ENCODE measurements at regions of chr2 and their contacts with region 1.

Region 1: GRCh38 chr2:61016808-61017555 is 538 bp upstream of the PEX13 start:
- DNase-seq: peak; percentile 91

Region 2: DNA sequence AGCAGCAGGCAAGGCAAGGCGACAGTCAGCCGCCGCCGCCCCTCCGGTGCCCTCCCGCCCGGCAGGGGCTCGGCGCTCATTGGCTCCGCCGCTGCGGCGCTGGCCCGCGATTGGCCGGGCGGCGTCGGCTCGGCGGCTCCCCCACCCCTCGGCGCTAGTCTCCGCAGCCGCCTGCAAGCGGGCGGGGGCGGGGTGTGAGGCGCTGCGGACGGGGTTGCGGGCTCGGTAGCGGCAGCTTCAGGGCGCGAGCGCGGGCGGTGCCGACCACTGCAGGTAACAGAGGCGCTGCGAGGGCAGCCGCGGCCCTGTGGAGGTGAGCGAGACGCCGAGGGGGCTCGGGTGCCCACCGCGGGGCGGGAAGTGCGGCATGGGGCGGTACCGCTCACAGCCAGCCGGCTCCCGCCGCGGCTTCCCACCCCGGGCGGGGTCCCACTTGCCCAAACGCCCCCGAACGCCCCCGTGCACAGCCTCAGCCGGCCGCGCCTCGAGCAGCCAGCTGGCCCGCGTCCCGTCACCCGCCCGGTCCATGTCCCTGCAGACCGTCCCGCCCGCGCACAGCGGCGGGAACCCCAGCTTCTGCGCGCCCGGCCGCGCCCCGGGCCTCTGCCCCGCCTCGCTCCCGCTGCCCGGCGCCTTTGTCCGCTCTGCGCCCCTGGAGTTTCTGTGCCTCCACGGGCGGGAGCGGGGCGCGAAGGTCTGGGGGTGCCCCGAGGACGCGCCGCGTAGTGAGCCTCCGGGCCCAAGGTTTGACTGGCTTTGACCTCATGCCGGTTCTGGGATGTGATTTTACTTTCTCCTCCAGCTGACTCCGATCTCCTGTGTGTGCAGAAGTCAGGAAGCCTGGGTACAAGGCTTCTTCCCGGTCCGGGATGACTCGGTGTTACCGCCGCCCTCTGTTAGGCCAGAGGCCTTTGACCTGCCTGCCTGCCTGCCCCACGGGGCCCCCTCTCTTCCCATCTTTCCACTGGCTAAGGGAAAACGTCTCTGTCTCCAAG is 49.0 kb after region 1 on chr2 and contains the start of gene SANBR:
- intact Hi-C with region 1: loop called (anchors 1 kb)
- DNase-seq: peak; percentile 94
- total RNA-seq, gene SANBR: 9.6 TPM

Region 3: DNA sequence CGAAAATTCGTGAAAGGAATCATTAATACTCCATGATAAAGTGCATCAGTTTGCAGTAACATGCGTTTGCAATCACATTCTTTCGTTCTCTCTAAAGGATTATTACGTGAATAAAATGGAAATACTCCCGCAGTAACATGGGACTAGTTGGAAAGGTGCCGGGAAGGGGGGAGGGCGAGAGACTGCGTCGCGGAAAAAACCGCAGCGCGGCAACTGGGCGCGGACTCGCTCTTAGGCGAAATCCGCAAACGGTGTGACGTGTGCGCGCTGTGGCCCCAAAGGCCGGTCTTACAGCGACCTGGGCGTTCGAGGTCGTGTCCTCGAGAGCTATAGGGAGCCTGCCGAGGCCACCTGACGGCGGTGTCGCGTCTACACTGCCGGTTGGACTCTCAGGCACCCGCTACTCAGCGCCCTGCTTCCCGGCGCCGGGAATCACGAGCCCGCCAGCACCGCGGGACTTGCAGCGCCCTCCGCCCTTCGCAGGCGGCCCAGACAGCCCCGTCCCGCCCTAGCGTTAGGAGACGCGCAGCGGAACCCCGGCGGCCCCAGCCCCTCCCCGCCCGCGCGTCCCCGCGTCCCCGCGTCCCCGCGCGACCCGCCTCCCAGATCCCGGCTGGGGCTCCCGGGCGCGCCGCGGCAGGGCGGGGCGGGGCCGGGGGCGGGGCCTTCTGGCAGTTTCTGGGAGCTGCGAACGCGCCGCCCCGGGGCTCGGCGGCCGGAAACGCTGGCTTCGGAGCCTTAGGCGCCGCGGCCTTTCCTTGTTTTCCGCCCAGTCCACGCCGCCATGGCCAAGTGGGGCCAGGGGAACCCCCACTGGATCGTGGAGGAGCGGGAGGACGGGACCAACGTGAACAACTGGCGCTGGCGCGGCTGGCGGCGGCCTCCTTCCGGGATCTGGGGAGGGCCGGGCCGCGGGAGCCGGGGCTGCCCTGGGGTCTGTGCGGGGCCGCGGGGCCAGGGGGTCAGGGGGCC is 160.1 kb after region 1 on chr2:
- intact Hi-C with region 1: loop called (anchors 2 kb)
- DNase-seq: peak; percentile 96

Region 4: GRCh38 chr2:61529944-61530735 is 513.2 kb after region 1 on chr2:
- intact Hi-C with region 1: no loop called
- DNase-seq: no peak

Region 5: GRCh38 chr2:62856228-62857040 is 1839.5 kb after region 1 on chr2:
- intact Hi-C with region 1: no loop called
- DNase-seq: no peak

Measured in cardiac septum (tissue), 1 donor.